CD8-positive, alpha-beta memory T cell (primary cell): ENCODE measurements at regions of chr6 and their contacts with region 1.

Region 1: GRCh38 chr6:158686791-158687381 is 37.0 kb downstream of the SYTL3 start:
- DNase-seq: peak; percentile 21 to 88 (median 79)
- H3K4me3 ChIP-seq: peak overlapping the region; percentile 27
- H3K4me3 Mint-ChIP-seq: peak overlapping the region; percentile 34 to 90 (median 80)
- H3K27ac ChIP-seq: peak overlapping the region; percentile 77
- H3K27ac Mint-ChIP-seq: peak overlapping the region; percentile 96 to 100 (median 99)
- H3K4me1 ChIP-seq: peaks cover 47% of the 10 kb centered on the region
- H3K4me1 Mint-ChIP-seq: peaks cover 38 to 75% (median 70%) of the 10 kb centered on the region in 3 donors
- H3K27me3 ChIP-seq: no peaks in the 10 kb centered on the region
- H3K27me3 Mint-ChIP-seq: no peaks in the 10 kb centered on the region

Region 2: DNA sequence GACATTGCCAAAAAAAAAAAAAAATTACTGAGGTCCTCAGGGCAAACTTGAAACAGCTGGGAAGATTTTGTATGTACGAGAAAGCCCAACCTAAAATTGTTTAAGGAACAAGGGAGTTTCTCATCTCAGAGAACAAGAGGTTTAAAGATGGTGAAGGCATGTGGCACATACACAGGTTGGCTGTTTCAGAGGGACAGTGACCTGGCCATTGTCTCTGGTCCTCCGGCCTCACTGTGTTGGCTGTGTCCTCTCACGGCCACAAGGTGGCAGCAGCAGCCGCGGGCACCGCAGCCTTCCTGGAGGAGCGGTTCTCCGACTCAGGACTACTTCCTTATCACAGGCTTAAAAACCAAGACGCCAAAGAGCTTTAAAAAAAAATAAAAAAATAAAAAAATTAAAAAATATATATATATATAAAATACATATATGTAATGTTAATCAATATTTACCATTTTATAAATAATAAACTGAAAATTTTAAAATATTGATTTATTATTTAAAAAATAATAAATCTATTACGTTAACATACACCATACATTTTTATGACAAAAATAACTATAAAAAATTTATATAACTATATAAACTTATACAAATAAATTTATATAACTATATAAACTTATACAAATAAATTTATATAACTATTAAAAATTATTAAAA is 466.0 kb before region 1 on chr6:
- CTCF ChIA-PET with region 1: interaction called, 13 read pairs
- POLR2A ChIA-PET with region 1: no interaction called
- DNase-seq: peak; percentile 60 to 84 (median 65)
- H3K4me3 ChIP-seq: no peak overlapping the region
- H3K4me3 Mint-ChIP-seq: no peak overlapping the region
- H3K27ac ChIP-seq: no peak overlapping the region
- H3K27ac Mint-ChIP-seq: no peak overlapping the region
- H3K4me1 ChIP-seq: no peaks in the 10 kb centered on the region
- H3K4me1 Mint-ChIP-seq: peaks cover 1 to 5% (median 4%) of the 10 kb centered on the region in 3 donors
- H3K27me3 ChIP-seq: no peaks in the 10 kb centered on the region
- H3K27me3 Mint-ChIP-seq: peaks cover 0 to 2% of the 10 kb centered on the region in 2 donors

Region 3: DNA sequence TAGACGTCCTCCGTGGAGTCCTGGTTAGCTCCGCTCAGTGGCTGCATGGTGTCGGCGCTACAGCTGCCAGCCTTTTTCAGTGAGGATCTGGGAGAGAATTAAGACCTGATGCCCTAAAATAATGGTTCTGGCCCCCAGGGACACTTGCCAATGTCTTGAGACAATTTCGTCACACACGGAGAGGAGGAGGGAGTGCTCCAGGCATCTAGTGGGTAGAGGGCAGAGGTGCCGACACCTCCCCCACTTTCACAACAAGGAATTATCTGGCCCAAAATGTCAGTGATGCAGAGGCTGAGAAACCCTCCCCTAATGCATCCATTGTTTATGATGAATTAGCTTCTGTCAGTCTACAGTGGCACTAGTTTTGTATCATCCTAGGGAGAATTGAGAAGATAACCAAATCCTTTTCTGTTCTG is 102.6 kb before region 1 on chr6:
- CTCF ChIA-PET with region 1: no interaction called
- POLR2A ChIA-PET with region 1: no interaction called
- DNase-seq: no peak
- H3K4me3 ChIP-seq: no peak overlapping the region
- H3K4me3 Mint-ChIP-seq: no peak overlapping the region
- H3K27ac ChIP-seq: no peak overlapping the region
- H3K27ac Mint-ChIP-seq: peak overlapping the region in 2 of 8 donors; percentile 39 to 47
- H3K4me1 ChIP-seq: no peaks in the 10 kb centered on the region
- H3K4me1 Mint-ChIP-seq: peaks cover 7 to 12% (median 10%) of the 10 kb centered on the region in 3 donors
- H3K27me3 ChIP-seq: no peaks in the 10 kb centered on the region
- H3K27me3 Mint-ChIP-seq: no peaks in the 10 kb centered on the region

Region 4: GRCh38 chr6:158644231-158645063 is 42.4 kb before region 1 on chr6 and contains the start of gene DYNLT1:
- CTCF ChIA-PET with region 1: interaction called, 20 read pairs
- POLR2A ChIA-PET with region 1: interaction called, 8 read pairs
- DNase-seq: peak; percentile 76 to 89 (median 86)
- H3K4me3 ChIP-seq: peak within 1 kb of the TSS; percentile 82
- H3K4me3 Mint-ChIP-seq: peak within 1 kb of the TSS; percentile 97 to 100 (median 99)
- H3K27ac ChIP-seq: peak within 1 kb of the TSS; percentile 93
- H3K27ac Mint-ChIP-seq: peak within 1 kb of the TSS; percentile 90 to 100 (median 99)
- H3K4me1 ChIP-seq: peaks cover 55% of the 10 kb centered on the region
- H3K4me1 Mint-ChIP-seq: peaks cover 57 to 82% (median 67%) of the 10 kb centered on the region in 3 donors
- H3K27me3 ChIP-seq: no peaks in the 10 kb centered on the region
- H3K27me3 Mint-ChIP-seq: no peaks in the 10 kb centered on the region
- total RNA-seq, gene DYNLT1: 94.8 to 103 TPM

Region 5: GRCh38 chr6:158660333-158660754 is 26.5 kb before region 1 on chr6:
- CTCF ChIA-PET with region 1: interaction called, 50 read pairs
- POLR2A ChIA-PET with region 1: interaction called, 4 read pairs
- DNase-seq: peak in 4 of 5 donors; percentile 19 to 69 (median 59)
- H3K4me3 ChIP-seq: no peak overlapping the region
- H3K4me3 Mint-ChIP-seq: peak overlapping the region in 5 of 7 donors; percentile 8 to 48 (median 43)
- H3K27ac ChIP-seq: no peak overlapping the region
- H3K27ac Mint-ChIP-seq: peak overlapping the region; percentile 47 to 92 (median 83)
- H3K4me1 ChIP-seq: peaks cover 29% of the 10 kb centered on the region
- H3K4me1 Mint-ChIP-seq: peaks cover 21 to 48% (median 38%) of the 10 kb centered on the region in 3 donors
- H3K27me3 ChIP-seq: no peaks in the 10 kb centered on the region
- H3K27me3 Mint-ChIP-seq: no peaks in the 10 kb centered on the region

Region 6: GRCh38 chr6:158752613-158753012 is 65.7 kb after region 1 on chr6:
- CTCF ChIA-PET with region 1: no interaction called
- POLR2A ChIA-PET with region 1: no interaction called
- DNase-seq: no peak
- H3K4me3 ChIP-seq: no peak overlapping the region
- H3K4me3 Mint-ChIP-seq: no peak overlapping the region
- H3K27ac ChIP-seq: no peak overlapping the region
- H3K27ac Mint-ChIP-seq: peak overlapping the region in 2 of 8 donors; percentile 14 to 50
- H3K4me1 ChIP-seq: no peaks in the 10 kb centered on the region
- H3K4me1 Mint-ChIP-seq: no peaks in the 10 kb centered on the region
- H3K27me3 ChIP-seq: no peaks in the 10 kb centered on the region
- H3K27me3 Mint-ChIP-seq: no peaks in the 10 kb centered on the region

Region 7: DNA sequence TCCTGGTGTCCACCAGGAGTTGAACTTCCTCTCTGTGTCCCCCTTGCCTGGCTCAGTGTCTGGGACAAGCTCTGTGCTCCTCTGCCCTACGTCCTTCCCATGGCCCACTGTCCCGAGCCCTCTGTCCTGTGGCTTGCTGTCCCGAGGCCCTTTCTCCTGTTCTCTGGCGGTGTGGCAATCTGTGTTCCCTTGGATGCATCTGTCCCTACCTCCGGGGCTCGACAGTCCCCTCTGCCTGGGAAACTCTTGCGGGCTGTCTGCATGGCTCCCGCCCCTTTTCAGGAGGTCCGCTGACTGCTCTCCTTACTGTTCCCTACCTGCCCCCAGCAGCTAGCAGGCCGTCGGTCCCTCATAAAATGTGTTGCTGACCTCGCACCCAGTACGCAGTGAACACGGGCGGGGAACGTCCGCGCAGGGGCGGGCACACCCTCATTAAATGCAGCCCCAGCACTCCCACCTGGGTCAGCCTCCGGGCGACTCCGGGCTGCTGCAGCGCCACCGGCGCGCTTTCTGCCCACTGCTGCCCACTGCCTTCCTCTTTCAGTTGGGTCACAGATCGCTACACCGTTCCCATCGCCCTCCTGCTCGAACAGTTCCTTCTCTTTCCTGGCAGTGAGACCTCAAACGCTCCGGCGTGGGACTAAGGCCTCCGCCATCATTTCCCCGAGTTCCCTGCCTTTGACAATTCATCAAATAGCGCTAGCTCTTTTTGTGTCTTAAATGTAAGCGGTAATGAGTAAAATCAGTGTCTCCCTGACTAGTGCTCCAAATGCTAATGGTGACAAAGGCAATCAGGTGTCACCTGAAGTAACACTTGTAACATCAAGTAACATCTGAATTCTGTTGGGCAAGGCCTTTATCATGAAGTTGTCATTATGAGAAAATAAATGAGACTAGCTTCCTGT is 252.6 kb after region 1 on chr6:
- CTCF ChIA-PET with region 1: no interaction called
- POLR2A ChIA-PET with region 1: interaction called, 11 read pairs
- DNase-seq: peak in 1 of 5 donors; percentile 7
- H3K4me3 ChIP-seq: peak overlapping the region; percentile 20
- H3K4me3 Mint-ChIP-seq: peak overlapping the region; percentile 17 to 84 (median 71)
- H3K27ac ChIP-seq: no peak overlapping the region
- H3K27ac Mint-ChIP-seq: peak overlapping the region in 4 of 8 donors; percentile 22 to 91 (median 67)
- H3K4me1 ChIP-seq: peaks cover 6% of the 10 kb centered on the region
- H3K4me1 Mint-ChIP-seq: peaks cover 6 to 15% (median 8%) of the 10 kb centered on the region in 3 donors
- H3K27me3 ChIP-seq: no peaks in the 10 kb centered on the region
- H3K27me3 Mint-ChIP-seq: peaks cover 4 to 7% of the 10 kb centered on the region in 2 donors

Region 8: DNA sequence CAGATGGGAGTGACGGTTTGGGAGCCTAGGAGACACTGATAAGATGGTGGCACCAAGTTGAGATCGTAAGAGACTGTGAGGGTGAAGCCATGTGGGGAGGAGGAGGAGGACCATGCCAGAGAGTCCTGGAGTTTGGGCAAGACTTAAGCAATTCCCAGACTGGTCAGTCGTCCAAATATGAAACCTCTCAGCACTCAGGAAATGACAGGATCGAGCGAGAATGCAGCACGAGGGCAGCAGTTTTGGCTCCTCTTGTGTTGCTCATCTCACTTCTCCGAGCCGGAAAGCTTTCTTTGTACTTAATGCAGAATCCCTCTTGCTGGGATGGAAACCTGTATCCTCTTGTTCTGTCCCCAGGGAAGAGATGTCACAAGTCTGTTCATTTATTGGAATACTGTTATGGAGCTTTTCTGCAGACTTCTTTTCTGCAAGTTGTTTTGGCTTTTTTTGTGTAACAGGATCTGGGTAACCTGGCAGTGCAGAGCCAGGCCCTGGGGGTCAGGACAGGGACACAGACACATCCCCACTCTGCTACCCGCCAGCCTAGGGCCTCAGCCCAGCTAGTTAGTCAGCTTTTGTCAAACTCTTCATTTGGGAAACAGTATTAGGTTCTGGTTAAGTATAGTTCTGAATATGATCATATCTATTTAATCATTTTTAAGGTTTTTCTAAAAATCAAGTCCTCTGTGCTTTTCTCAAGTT is 516.6 kb after region 1 on chr6:
- CTCF ChIA-PET with region 1: no interaction called
- POLR2A ChIA-PET with region 1: no interaction called
- DNase-seq: no peak
- H3K4me3 ChIP-seq: no peak overlapping the region
- H3K4me3 Mint-ChIP-seq: no peak overlapping the region
- H3K27ac ChIP-seq: no peak overlapping the region
- H3K27ac Mint-ChIP-seq: peak overlapping the region in 1 of 8 donors; percentile 3
- H3K4me1 ChIP-seq: no peaks in the 10 kb centered on the region
- H3K4me1 Mint-ChIP-seq: peaks cover 0 to 5% (median 0%) of the 10 kb centered on the region in 3 donors
- H3K27me3 ChIP-seq: no peaks in the 10 kb centered on the region
- H3K27me3 Mint-ChIP-seq: peaks cover 23 to 52% of the 10 kb centered on the region in 2 donors